HepG2 (cell line): ENCODE measurements at regions of chr7 and their contacts with region 1.

Region 1: DNA sequence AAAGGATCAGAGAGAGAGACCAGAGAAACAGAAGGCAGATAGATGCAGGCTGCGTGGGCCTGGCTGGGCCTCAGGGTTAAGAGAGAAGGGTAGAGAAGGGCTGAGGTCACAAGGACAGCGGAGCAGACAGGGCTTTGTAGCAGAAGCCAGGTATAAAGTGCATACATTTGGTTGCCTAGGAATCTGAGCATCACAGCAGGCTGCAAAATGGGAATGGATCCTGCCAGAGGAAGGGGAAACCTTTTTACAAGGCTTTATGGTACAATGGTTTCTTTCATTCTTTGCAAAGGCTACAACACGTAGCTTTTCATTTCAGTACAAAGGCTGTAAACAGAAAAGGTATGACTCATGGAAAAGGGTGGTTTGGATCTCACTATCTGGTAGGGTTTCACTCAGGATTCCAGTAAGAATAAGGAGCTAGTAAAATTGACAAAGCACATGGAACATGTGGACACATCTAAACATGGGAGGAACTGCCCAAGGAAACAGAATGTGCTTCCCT is 275.1 kb downstream of the DOCK4 start:
- DNase-seq: peak; percentile 96
- ATAC-seq: peak; percentile 98
- H3K4me3 ChIP-seq: peak overlapping the region in 2 of 3 experiments; percentile 11 to 12; a peak in 2 of 6 replicates
- H3K27ac ChIP-seq: peak overlapping the region; percentile 88
- H3K4me1 ChIP-seq: peaks cover 44% of the 10 kb centered on the region
- H3K27me3 ChIP-seq: no peaks in the 10 kb centered on the region
- CTCF ChIP-seq: no peak
- EP300 ChIP-seq: peak in 1 of 2 experiments; percentile 82; a peak in 2 of 4 replicates
- POLR2A ChIP-seq: no peak; a peak in 1 of 4 replicates
- RAD21 ChIP-seq: no peak

Region 2: GRCh38 chr7:111362506-111363054 is 568.5 kb before region 1 on chr7:
- CTCF ChIA-PET with region 1: no interaction called
- POLR2A ChIA-PET with region 1: no interaction called
- in situ Hi-C with region 1: no loop called
- intact Hi-C with region 1: no loop called
- DNase-seq: no peak
- ATAC-seq: no peak
- H3K4me3 ChIP-seq: no peak overlapping the region
- H3K27ac ChIP-seq: no peak overlapping the region
- H3K4me1 ChIP-seq: no peaks in the 10 kb centered on the region
- H3K27me3 ChIP-seq: no peaks in the 10 kb centered on the region
- CTCF ChIP-seq: no peak
- EP300 ChIP-seq: no peak
- POLR2A ChIP-seq: no peak
- RAD21 ChIP-seq: no peak

Region 3: DNA sequence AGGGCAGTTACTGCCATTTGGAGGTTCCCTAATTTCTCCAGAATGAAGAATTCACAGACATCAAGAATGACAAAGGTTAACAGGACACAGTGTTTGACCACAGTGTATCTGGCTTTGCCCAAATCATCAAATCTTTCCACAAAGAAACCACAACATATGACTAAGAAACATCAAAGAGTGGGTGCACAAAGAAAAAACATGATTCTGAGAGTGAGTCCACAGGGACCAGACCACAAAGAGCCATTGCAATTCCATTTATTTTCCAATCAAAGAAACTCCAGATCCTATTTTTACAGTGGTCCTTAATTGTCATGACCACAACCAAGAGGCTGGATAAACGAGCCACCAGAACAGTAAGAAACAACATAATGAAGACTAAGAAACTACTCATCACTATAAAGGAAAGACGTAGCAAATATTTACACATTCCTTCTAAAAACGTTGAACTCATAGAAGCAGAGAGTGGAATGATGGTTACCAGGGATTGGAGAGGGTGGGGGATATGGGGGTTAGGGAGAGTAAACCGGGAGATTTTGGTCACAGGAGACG is 11.4 kb before region 1 on chr7:
- CTCF ChIA-PET with region 1: no interaction called
- POLR2A ChIA-PET with region 1: interaction called, 14 read pairs
- in situ Hi-C with region 1: no loop called
- intact Hi-C with region 1: loop called (anchors 1 kb)
- DNase-seq: peak; percentile 90
- ATAC-seq: peak; percentile 92
- H3K4me3 ChIP-seq: peak overlapping the region in 2 of 3 experiments; percentile 16 to 35; a peak in 3 of 6 replicates
- H3K27ac ChIP-seq: peak overlapping the region; percentile 54
- H3K4me1 ChIP-seq: peaks cover 35% of the 10 kb centered on the region
- H3K27me3 ChIP-seq: no peaks in the 10 kb centered on the region
- CTCF ChIP-seq: no peak
- EP300 ChIP-seq: peak in 1 of 2 experiments; percentile 85; a peak in 2 of 4 replicates
- POLR2A ChIP-seq: no peak
- RAD21 ChIP-seq: no peak

Region 4: DNA sequence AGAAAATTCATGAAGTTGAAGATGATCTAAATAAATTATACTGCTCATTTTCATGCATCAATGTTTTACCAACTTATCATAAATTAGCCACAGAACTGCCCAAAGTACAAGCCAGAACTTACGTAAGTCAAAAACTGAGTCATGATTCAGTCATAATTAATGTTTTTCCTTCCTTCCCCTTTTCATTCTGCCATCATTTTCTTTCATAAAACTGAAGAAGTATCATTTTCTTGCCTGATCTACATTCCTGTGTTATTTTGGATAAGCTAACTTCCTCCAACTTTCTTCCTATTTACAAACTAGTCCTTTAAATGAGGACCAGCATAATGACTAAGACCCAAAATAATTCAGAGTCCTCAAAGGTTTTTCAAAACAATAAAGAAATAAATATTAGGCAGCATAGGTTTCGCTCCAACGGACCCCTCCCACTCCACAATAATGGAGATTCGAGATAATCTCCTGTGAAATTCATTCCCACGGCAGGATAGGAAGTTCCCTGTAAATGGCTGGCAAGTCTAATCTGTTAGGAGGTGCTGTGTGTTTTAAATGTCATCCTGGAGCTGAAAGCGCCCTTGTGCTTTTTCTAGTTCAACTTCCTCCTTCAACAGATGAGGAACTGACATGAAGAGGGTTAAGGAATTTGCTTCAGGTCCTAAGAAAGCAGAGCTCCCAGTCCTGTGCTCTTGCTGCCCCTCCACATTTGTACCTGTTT is 56.2 kb after region 1 on chr7:
- CTCF ChIA-PET with region 1: no interaction called
- POLR2A ChIA-PET with region 1: no interaction called
- in situ Hi-C with region 1: no loop called
- intact Hi-C with region 1: no loop called
- DNase-seq: no peak
- ATAC-seq: no peak
- H3K4me3 ChIP-seq: no peak overlapping the region
- H3K27ac ChIP-seq: no peak overlapping the region
- H3K4me1 ChIP-seq: no peaks in the 10 kb centered on the region
- H3K27me3 ChIP-seq: no peaks in the 10 kb centered on the region
- CTCF ChIP-seq: no peak
- EP300 ChIP-seq: no peak
- POLR2A ChIP-seq: no peak
- RAD21 ChIP-seq: no peak